Right cardiac atrium (tissue), 5 donors: ENCODE measurements at regions of chr18 and their contacts with region 1.

Region 1: DNA sequence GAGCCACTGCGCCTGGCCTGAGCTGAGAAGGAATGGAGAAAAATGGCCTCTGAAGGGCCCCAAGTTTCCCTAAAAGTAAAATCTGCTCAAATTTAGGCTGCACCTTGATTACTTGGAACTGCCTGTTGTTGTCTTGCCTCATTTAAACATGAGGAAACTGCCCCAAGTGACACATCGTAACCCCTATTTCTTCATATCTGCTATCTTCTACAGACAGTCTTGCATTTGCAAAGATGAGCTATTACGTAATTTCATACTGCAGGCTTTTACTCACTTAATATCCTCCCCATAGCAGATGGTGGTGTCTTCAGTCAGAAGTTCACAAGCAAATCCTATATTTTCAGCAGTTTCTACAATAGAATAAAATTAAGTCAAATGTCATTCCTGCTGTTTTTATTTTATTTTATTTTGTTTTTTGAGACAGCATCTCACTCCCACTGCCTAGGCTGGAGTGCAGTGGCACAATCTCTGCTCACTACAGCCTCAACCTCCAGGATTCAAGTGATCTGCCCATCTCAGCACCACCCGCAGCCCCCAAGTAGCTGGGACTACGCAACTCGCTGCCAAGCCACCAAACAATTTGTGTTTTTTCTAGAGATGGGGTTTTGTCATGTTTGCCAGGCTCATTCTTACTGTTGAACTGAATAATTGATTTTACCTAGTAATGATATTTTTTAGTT is 45.3 kb upstream of the NARS1 start:
- DNase-seq: no peak
- ATAC-seq: peak; percentile 36 to 60
- H3K4me3 ChIP-seq: no peak overlapping the region
- H3K27ac ChIP-seq: no peak overlapping the region
- H3K4me1 ChIP-seq: peaks cover 3% of the 10 kb centered on the region
- H3K27me3 ChIP-seq: no peaks in the 10 kb centered on the region

Region 2: GRCh38 chr18:57586251-57587049 is 80.5 kb before region 1 on chr18 and contains the start of gene FECH:
- intact Hi-C with region 1: no loop called
- DNase-seq: peak; percentile 90 to 95 (median 95)
- ATAC-seq: peak; percentile 99
- H3K4me3 ChIP-seq: peak within 1 kb of the TSS; percentile 63
- H3K27ac ChIP-seq: peak within 1 kb of the TSS; percentile 39
- H3K4me1 ChIP-seq: peaks cover 3% of the 10 kb centered on the region
- H3K27me3 ChIP-seq: no peaks in the 10 kb centered on the region
- total RNA-seq, gene FECH: 19.0 to 30.6 (median 24.8) TPM

Region 3: DNA sequence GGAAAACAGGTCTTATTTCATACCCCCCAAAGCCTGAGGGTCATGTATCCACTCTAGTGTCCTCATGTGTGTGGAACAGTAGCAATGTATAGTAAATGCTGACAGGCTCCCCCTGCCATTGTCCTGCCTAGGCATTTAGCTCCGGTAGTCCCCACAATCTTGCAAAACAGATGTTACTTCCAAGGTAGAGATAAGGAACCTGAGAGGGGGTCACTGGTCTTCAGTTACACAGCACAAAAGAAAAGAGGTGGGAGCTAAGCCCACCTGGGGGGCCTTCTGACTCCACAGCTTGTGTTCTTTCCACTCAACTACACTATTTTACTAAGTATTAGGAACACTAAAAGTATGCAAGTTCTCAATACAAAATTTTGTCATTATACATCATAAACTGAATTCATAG is 63.1 kb before region 1 on chr18:
- intact Hi-C with region 1: no loop called
- DNase-seq: no peak
- ATAC-seq: no peak
- H3K4me3 ChIP-seq: no peak overlapping the region
- H3K27ac ChIP-seq: no peak overlapping the region
- H3K4me1 ChIP-seq: no peaks in the 10 kb centered on the region
- H3K27me3 ChIP-seq: no peaks in the 10 kb centered on the region

Region 4: DNA sequence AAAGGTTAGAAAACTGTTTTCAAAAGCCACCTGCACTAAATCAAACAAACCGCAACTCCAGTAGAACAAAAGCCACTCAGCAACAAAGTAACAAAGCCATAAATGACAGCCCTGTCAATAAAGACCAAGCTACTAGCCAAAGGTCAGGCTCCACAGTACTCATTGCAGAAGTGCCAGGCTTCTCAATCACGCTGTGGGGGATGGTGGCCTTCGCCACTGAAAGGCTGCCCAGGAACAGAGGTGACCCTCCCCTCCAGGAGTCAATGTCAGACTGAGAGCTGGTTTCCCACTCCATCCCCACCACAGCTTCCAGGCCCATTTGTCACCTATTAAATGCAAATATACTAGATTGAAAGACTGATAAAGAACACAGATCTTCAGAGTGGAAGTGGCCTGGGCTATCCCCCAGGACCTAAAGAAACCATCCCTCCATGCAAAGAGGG is 130.3 kb after region 1 on chr18:
- intact Hi-C with region 1: loop called in 1 of 4 experiments (anchors 10 kb)
- DNase-seq: no peak
- ATAC-seq: no peak
- H3K4me3 ChIP-seq: no peak overlapping the region
- H3K27ac ChIP-seq: no peak overlapping the region
- H3K4me1 ChIP-seq: peaks cover 7% of the 10 kb centered on the region
- H3K27me3 ChIP-seq: no peaks in the 10 kb centered on the region

Region 5: DNA sequence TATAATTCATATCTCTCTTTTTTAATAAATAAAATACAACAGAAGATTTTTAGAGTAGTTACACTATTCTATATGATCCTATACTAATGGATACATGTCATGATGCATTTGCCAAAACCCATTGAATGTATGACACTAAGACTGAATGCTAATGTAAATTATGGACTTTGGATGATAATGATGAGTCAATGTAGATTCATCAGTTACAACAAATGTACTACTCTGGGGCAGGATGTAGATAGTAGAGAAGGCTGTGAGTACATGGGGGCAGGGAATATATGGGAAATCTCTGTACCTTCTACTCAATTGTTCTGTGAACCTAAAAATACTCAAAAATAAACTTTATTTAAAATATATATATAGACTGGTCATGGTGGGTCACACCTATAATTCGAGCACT is 331.5 kb after region 1 on chr18:
- intact Hi-C with region 1: no loop called
- DNase-seq: no peak
- ATAC-seq: no peak
- H3K4me3 ChIP-seq: no peak overlapping the region
- H3K27ac ChIP-seq: no peak overlapping the region
- H3K4me1 ChIP-seq: no peaks in the 10 kb centered on the region
- H3K27me3 ChIP-seq: no peaks in the 10 kb centered on the region